ENCODE measurements at regions of chr22 and their contacts with region 1.

Region 1: DNA sequence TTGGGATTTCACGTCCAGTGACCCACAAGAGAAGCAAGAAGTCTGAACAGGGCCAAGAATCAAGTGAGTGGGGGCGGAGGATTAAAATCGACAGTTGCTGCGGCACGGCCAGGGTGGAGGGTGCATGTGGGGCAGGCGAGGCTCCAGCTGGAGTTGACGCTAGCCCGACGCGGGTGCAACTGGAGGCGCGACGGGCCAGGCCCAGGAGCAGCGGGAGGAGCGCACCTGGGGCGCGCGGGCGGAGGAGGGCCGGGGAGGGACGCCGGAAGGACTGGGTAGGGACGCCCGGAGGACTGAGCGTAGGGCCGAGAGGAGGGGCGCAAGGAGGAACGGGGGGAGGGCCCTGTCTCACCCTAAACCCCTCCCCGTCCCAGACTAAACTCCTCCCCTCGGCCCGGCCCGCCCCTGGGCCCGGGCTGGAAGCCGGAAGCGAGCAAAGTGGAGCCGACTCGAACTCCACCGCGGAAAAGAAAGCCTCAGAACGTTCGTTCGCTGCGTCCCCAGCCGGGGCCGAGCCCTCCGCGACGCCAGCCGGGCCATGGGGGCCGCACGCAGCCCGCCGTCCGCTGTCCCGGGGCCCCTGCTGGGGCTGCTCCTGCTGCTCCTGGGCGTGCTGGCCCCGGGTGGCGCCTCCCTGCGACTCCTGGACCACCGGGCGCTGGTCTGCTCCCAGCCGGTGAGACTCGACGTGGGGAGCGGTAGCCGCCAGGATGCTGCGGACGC is at the start of gene IL17RA:
- DNase-seq: peak; percentile 94
- ATAC-seq: peak; percentile 98
- H3K4me3 Mint-ChIP-seq: peak within 1 kb of the TSS; percentile 81
- H3K27ac Mint-ChIP-seq: peak within 1 kb of the TSS; percentile 85
- H3K4me1 Mint-ChIP-seq: peaks cover 45% of the 10 kb centered on the region
- H3K27me3 Mint-ChIP-seq: no peaks in the 10 kb centered on the region
- CTCF ChIP-seq: no peak
- total RNA-seq, gene IL17RA: 14.0 to 14.2 TPM

Region 2: DNA sequence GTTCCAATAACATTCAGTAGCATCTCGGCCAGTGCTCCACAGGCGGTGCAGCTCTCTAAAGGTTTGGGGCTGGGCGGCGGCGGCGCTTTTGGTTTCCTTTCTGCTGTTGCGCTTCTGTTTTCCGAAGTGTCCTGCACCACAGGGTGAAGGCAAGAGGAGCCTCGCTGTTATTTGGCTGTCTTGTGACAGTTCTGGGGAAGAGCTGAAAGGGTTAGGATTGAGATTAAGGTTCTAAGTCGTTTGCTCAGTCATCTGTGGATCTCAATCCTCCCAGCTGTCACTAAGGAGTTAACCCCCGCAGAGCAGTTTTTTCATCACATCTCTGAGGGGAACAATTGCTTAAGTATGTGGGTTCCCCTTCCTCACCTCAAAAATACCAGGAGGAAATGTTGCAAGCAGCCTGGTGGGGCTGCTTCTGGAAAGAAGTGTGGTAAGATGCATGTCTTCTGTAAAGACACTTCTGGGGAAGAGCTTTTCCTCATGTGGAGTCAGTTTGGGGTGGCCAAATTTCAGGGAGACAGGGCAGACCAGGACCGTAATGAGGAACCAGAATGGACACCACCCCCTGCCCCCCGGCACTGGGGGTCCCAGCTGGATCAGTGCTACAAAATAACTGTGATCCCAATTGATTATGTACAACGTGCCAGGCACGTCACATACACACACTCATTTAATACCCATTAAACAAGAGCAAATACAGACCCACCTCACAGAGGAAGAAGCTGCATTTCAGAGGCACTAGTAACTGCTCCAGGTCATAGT is 22.3 kb after region 1 on chr22:
- CTCF ChIA-PET with region 1: interaction called, 4 read pairs
- POLR2A ChIA-PET with region 1: interaction called, 10 read pairs
- intact Hi-C with region 1: no loop called
- DNase-seq: peak; percentile 66
- ATAC-seq: peak; percentile 77
- H3K4me3 Mint-ChIP-seq: peak overlapping the region; percentile 42
- H3K27ac Mint-ChIP-seq: peak overlapping the region; percentile 81
- H3K4me1 Mint-ChIP-seq: peaks cover 38% of the 10 kb centered on the region
- H3K27me3 Mint-ChIP-seq: no peaks in the 10 kb centered on the region
- CTCF ChIP-seq: peak; percentile 12

Region 3: DNA sequence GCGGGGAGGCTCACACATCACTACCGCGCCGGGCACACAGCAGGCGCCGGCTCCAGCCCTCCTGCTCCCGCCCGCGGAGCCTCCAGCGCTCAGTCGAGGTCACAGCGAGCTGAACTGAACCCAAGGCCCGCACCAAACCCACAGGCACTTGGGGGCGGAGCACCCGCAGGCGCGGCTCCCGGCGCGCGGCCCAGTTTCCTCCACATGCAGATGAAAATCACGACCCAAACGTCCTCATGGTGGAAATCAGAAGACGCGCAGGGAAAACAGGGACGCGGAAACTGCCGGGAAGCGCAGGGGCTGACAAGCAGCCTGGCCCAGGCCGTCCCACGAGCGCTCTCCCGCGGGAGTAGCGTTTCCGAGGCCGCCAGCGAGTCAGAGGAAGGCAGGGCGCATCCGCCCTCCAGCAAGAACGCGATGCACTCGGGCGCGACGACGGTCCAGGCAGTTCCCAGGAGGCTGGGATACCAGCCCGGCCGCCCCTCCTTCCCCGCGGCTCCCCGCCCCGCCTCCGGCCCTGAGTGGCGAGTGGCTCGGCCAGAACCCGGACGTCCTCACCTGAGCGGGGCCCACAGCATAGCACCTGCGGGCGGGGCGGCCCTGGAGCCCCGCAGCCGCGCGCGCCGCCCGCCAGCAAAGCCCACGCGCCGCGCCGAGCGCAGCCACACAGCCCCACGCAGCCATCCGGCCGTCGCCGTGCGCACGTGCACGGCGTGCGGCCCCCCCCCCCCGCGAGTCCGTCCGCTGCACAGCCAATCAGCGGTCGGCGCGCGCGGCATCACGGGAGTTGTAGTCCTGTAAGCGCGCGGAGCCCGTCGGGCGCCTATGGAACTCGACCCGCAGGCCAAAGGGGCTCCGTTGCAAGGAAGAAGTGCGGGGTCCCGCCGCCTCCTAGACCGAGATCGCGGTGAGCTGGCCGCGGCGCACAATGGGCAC is 74.1 kb after region 1 on chr22 and contains the start of gene HDHD5:
- CTCF ChIA-PET with region 1: no interaction called
- POLR2A ChIA-PET with region 1: interaction called, 7 read pairs
- intact Hi-C with region 1: loop called (anchors 5 kb)
- DNase-seq: peak; percentile 93
- ATAC-seq: peak; percentile 86
- H3K4me3 Mint-ChIP-seq: peak within 1 kb of the TSS; percentile 80
- H3K27ac Mint-ChIP-seq: peak within 1 kb of the TSS; percentile 89
- H3K4me1 Mint-ChIP-seq: peaks cover 31% of the 10 kb centered on the region
- H3K27me3 Mint-ChIP-seq: no peaks in the 10 kb centered on the region
- CTCF ChIP-seq: no peak
- total RNA-seq, gene HDHD5: 68.1 to 71.4 TPM